Activated CD4-positive, alpha-beta memory T cell treated with anti-CD3 and anti-CD28 coated beads, Interleukin-2, amount 10 ng/mL, durations not matched to agents 7 days and 5 days (primary cell): ENCODE measurements at regions of chr16 and their contacts with region 1.

Region 1: GRCh38 chr16:22007509-22008214 is at the start of gene MOSMO:
- DNase-seq: peak; percentile 69
- H3K4me3 Mint-ChIP-seq: peak within 1 kb of the TSS; percentile 83
- H3K27ac Mint-ChIP-seq: peak within 1 kb of the TSS; percentile 49
- H3K4me1 Mint-ChIP-seq: peaks cover 34% of the 10 kb centered on the region
- H3K27me3 Mint-ChIP-seq: no peaks in the 10 kb centered on the region
- total RNA-seq, gene MOSMO: 12.1 to 13.0 TPM

Region 2: GRCh38 chr16:21952793-21953540 is 54.7 kb before region 1 on chr16 and contains the start of gene UQCRC2:
- CTCF ChIA-PET with region 1: interaction called, 7 read pairs
- POLR2A ChIA-PET with region 1: interaction called, 10 read pairs
- DNase-seq: peak; percentile 87
- H3K4me3 Mint-ChIP-seq: peak within 1 kb of the TSS; percentile 97
- H3K27ac Mint-ChIP-seq: peak within 1 kb of the TSS; percentile 82
- H3K4me1 Mint-ChIP-seq: peaks cover 69% of the 10 kb centered on the region
- H3K27me3 Mint-ChIP-seq: no peaks in the 10 kb centered on the region
- total RNA-seq, gene UQCRC2: 216 to 225 TPM

Region 3: DNA sequence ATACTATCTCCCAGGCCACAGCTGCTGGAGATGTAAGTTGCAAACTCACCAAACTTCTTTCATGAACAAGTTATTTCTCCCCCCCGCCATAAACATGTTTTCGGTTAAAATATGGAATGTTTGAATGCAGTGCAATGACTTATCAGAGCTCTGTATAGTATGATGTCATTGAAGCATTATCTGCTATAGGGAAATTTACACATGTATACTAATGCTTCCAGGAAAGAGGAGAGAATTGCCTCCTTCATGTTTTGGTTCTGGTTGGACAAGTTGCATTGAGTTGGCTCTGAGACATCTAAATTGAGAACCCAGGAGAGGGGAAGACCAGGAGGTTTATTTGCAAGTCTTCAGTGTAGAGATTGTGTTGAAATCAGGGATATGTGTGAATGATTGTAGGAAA is 33.7 kb before region 1 on chr16:
- CTCF ChIA-PET with region 1: no interaction called
- POLR2A ChIA-PET with region 1: no interaction called
- DNase-seq: no peak
- H3K4me3 Mint-ChIP-seq: no peak overlapping the region
- H3K27ac Mint-ChIP-seq: no peak overlapping the region
- H3K4me1 Mint-ChIP-seq: no peaks in the 10 kb centered on the region
- H3K27me3 Mint-ChIP-seq: no peaks in the 10 kb centered on the region

Region 4: DNA sequence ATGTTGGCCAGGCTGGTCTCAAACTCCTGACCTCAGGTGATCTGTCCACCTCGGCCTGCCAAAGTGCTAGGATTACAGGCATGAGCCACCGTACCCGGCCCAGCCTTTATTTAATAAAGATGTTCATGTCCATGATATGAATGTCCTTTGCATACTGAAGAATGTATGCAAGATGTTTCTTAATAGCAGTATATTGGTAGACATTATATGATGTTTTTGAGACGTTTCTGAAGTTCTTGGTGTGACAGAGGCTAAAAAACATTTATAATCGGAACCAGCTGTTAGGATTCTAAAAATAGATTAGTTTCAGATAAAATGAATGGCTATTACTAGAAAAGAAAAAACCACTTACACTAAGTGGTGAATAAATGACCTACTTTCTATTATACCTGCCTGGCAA is 18.5 kb before region 1 on chr16:
- CTCF ChIA-PET with region 1: interaction called, 9 read pairs
- POLR2A ChIA-PET with region 1: interaction called, 14 read pairs
- DNase-seq: no peak
- H3K4me3 Mint-ChIP-seq: no peak overlapping the region
- H3K27ac Mint-ChIP-seq: no peak overlapping the region
- H3K4me1 Mint-ChIP-seq: peaks cover 41% of the 10 kb centered on the region
- H3K27me3 Mint-ChIP-seq: no peaks in the 10 kb centered on the region

Region 5: GRCh38 chr16:22763437-22764080 is 755.9 kb after region 1 on chr16:
- CTCF ChIA-PET with region 1: no interaction called
- POLR2A ChIA-PET with region 1: no interaction called
- DNase-seq: no peak
- H3K4me3 Mint-ChIP-seq: no peak overlapping the region
- H3K27ac Mint-ChIP-seq: no peak overlapping the region
- H3K4me1 Mint-ChIP-seq: no peaks in the 10 kb centered on the region
- H3K27me3 Mint-ChIP-seq: peaks cover 3% of the 10 kb centered on the region